Tibial artery (tissue), 4 donors: ENCODE measurements at regions of chr20 and their contacts with region 1.

Region 1: GRCh38 chr20:36929290-36929689 is 22.2 kb downstream of the SAMHD1 start:
- DNase-seq: peak in 1 of 2 donors; percentile 33
- H3K4me3 ChIP-seq: no peak overlapping the region
- H3K27ac ChIP-seq: no peak overlapping the region
- H3K4me1 ChIP-seq: peaks cover 0 to 14% (median 0%) of the 10 kb centered on the region in 4 donors
- H3K27me3 ChIP-seq: no peaks in the 10 kb centered on the region
- CTCF ChIP-seq: no peak

Region 2: GRCh38 chr20:35762481-35763245 is 1166.6 kb before region 1 on chr20:
- intact Hi-C with region 1: loop called (anchors 5 kb)
- DNase-seq: no peak
- H3K4me3 ChIP-seq: no peak overlapping the region
- H3K27ac ChIP-seq: no peak overlapping the region
- H3K4me1 ChIP-seq: peaks cover 0 to 3% (median under 1%) of the 10 kb centered on the region in 4 donors
- H3K27me3 ChIP-seq: no peaks in the 10 kb centered on the region
- CTCF ChIP-seq: no peak